Aorta (tissue), 5 donors: ENCODE measurements at regions of chr10 and their contacts with region 1.

Region 1: GRCh38 chr10:17617031-17617911 is at the start of gene HACD1:
- DNase-seq: peak; percentile 69 to 91
- ATAC-seq: peak; percentile 90
- H3K4me3 ChIP-seq: peak within 1 kb of the TSS; percentile 86 to 94
- H3K27ac ChIP-seq: peak within 1 kb of the TSS; percentile 85 to 97
- H3K4me1 ChIP-seq: peaks cover 0 to 5% of the 10 kb centered on the region in 2 donors
- H3K27me3 ChIP-seq: no peaks in the 10 kb centered on the region
- total RNA-seq, gene HACD1: 52.8 to 103 TPM

Region 2: DNA sequence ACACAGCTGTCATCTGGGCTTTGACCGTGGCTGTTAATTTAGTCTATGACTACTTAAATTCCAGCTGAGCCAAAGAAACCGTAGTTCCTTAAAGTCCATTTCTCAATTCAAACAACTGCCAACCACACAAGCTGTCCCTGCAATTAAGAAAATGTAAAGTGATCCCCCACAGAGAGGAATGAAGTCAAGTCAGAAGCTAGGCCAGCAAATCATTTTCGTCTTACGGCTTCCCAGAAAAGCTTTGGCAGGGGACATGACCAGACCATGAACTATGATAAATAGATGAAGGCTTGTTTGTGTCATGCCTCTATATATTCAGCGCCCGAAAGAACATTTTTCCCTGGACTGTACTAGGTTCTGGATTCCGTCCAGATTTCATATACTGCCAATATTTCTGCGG is 54.7 kb before region 1 on chr10:
- intact Hi-C with region 1: no loop called
- DNase-seq: no peak
- ATAC-seq: no peak
- H3K4me3 ChIP-seq: no peak overlapping the region
- H3K27ac ChIP-seq: no peak overlapping the region
- H3K4me1 ChIP-seq: no peaks in the 10 kb centered on the region
- H3K27me3 ChIP-seq: no peaks in the 10 kb centered on the region

Region 3: DNA sequence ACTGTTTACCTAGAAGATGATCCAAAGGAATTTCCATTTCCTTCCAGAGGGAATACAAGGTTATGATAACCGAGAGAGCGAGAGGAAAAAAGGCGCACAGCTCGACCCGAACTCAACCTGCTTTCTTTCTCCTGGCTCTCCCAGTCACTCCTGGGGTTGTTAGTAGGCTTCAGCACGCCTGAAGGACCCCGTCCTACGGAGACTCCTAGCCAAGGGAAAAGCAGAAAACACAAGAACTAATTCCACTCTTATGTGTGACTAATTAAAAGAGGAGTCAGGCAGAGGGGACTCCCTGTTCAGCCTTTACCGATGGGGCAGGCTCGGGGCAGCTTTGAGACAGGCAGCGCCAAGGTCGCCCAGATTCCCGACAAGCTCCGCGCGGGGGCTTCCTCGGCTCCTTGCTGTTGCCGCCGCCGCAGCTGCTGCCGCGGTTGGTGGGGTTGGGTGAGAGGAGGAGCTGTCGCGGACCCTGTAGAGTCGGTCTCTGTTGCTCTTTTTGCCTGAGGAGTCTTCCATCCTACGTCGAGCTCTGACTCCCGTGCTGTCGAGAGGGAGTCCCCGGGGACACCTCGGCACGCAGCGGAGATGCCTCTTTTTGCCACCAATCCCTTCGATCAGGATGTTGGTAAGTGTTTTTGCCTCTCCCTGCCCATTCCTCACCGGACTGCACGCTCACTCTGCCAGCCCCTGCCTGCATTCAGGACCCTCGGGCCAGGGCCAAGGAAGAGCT is 26.6 kb after region 1 on chr10 and contains the start of gene STAM:
- intact Hi-C with region 1: loop called in 1 of 2 experiments (anchors 1 kb)
- DNase-seq: peak; percentile 95 to 97
- ATAC-seq: peak; percentile 98
- H3K4me3 ChIP-seq: peak within 1 kb of the TSS; percentile 70 to 75
- H3K27ac ChIP-seq: peak within 1 kb of the TSS; percentile 54 to 71
- H3K4me1 ChIP-seq: peaks cover 3 to 6% of the 10 kb centered on the region in 2 donors
- H3K27me3 ChIP-seq: no peaks in the 10 kb centered on the region
- total RNA-seq, gene STAM: 21.8 to 28.6 TPM

Region 4: DNA sequence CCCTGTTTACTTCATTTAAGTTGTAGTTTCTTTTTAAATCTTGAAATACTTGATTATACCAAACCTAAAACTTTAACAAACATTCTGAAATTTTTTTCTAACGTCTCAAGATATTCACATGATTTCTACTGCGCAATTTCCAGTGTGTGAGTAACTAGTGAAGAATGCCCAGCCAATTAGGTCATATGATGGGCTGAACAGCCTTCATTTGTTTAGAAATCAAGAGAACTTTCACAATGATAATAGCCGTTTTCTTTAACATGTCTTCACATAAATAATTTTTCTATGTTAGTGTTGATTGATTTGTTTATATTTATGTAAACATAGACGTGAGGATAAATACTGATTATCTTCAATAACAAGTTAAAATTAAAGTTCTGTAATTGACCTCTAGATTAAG is 48.5 kb after region 1 on chr10:
- intact Hi-C with region 1: loop called in 1 of 2 experiments (anchors 10 kb)
- DNase-seq: no peak
- ATAC-seq: peak; percentile 79
- H3K4me3 ChIP-seq: no peak overlapping the region
- H3K27ac ChIP-seq: no peak overlapping the region
- H3K4me1 ChIP-seq: no peaks in the 10 kb centered on the region
- H3K27me3 ChIP-seq: no peaks in the 10 kb centered on the region

Region 5: GRCh38 chr10:18104223-18104872 is 487.1 kb after region 1 on chr10:
- intact Hi-C with region 1: no loop called
- DNase-seq: peak; percentile 69 to 87
- ATAC-seq: no peak
- H3K4me3 ChIP-seq: peak overlapping the region in 1 of 2 donors; percentile 54
- H3K27ac ChIP-seq: no peak overlapping the region
- H3K4me1 ChIP-seq: no peaks in the 10 kb centered on the region
- H3K27me3 ChIP-seq: no peaks in the 10 kb centered on the region